B cell (primary cell): ENCODE measurements at regions of chr2 and their contacts with region 1.

Region 1: GRCh38 chr2:238288650-238289573 is 502 bp upstream of the PER2 start:
- DNase-seq: peak; percentile 99
- ATAC-seq: peak; percentile 88
- H3K4me3 ChIP-seq: peak overlapping the region; percentile 51 to 89 (median 87)
- H3K4me3 Mint-ChIP-seq: peak overlapping the region; percentile 97
- H3K27ac ChIP-seq: peak overlapping the region; percentile 76 to 93
- H3K27ac Mint-ChIP-seq: peak overlapping the region; percentile 98
- H3K4me1 ChIP-seq: peaks cover 17 to 28% of the 10 kb centered on the region in 2 donors
- H3K4me1 Mint-ChIP-seq: peaks cover 38% of the 10 kb centered on the region
- H3K27me3 ChIP-seq: peaks cover 0 to 2% (median 0%) of the 10 kb centered on the region in 4 experiments
- H3K27me3 Mint-ChIP-seq: no peaks in the 10 kb centered on the region
- CTCF ChIP-seq: peak; percentile 25

Region 2: DNA sequence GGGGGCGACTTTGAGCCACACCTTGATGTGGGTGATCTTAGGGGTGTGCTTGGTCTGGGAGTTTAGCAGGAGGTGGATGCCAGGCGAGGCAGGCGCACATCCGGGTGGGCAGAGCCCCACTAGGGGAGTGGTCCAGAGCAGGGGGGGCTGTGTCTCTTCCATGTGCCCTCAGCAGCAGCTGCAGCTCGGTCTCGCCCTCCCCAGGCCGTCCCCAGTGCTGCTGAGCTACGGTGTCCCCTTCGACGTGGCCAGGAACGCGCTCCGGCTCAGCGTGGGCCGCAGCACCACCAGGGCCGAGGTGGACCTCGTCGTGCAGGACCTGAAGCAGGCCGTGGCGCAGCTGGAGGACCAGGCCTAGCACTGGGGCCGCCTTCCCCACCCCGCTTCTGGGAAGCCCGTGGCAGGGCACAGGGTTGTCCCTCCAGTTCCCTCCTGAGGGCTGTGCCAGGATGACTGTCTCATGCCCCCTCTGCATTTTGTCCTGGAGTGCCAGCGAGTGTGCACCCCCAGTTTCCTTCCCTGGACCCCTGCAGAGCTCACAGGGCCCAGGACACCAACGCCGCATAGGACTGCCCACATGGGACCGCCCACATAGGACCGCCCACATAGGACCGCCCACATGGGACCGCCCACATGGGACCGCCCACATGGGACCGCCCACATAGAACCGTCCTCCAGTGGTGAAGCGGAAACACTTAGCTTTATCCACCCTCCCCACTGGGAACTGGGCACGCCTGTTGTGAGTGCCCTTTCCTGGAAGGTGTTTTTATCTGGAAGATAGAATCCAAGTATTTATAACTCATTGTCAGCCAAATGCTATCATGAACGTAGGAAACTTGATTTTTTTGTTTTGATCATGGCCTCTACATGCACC is 190.7 kb before region 1 on chr2:
- CTCF ChIA-PET with region 1: no interaction called
- POLR2A ChIA-PET with region 1: no interaction called
- intact Hi-C with region 1: loop called (anchors 2 kb)
- DNase-seq: peak; percentile 73
- ATAC-seq: peak; percentile 97
- H3K4me3 ChIP-seq: peak overlapping the region in 2 of 5 experiments; percentile 26 to 41
- H3K4me3 Mint-ChIP-seq: peak overlapping the region; percentile 84
- H3K27ac ChIP-seq: no peak overlapping the region
- H3K27ac Mint-ChIP-seq: peak overlapping the region; percentile 88
- H3K4me1 ChIP-seq: peaks cover 15 to 22% of the 10 kb centered on the region in 2 donors
- H3K4me1 Mint-ChIP-seq: peaks cover 18% of the 10 kb centered on the region
- H3K27me3 ChIP-seq: no peaks in the 10 kb centered on the region
- H3K27me3 Mint-ChIP-seq: no peaks in the 10 kb centered on the region
- CTCF ChIP-seq: no peak

Region 3: DNA sequence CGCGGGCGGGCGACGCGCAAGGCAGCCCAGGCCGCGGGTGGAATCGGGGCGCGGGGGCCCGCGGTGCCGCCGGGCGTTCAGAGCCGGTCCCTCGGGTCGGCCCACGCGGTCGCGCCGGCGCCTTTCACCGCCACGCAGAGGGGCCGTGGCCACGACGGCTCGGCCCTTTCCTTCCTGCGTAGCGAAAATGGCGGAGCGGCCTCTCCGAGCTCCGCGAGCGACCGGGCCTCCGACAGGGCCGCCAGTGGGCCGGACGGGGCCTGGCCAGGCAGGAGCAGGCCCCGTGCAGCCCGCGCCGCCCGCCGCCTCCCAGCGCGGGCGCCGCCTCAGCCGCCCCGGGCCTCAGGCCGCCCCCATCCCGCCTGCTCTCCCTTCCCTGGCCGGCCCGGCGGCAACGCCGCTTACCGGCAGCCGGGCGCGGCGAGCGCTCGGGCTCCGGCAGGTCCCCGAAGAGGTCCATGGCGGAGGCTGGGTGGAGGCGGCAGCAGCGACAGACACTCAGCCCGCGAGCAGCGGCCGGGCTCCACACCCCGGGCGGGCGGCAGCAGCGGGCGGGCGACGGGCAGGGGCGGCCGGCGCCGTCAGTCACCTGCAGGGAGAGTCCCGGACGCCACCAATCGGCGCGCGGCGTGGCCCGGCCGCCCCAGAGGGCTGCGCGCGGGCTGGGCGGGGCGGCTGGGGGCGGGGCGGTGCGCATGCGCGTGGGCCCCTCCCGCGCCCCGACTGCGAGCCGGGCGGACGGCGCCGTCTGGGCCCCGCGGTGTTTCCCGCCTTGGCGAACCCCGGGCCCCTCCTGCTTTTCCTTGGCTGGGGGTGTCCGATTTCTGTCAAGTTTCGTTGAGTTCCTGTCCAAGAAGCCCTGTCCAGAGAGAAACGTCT is 85.6 kb before region 1 on chr2 and contains the start of gene ILKAP:
- CTCF ChIA-PET with region 1: no interaction called
- POLR2A ChIA-PET with region 1: no interaction called
- intact Hi-C with region 1: loop called (anchors 1 kb)
- DNase-seq: peak; percentile 93
- ATAC-seq: peak; percentile 97
- H3K4me3 ChIP-seq: peak within 1 kb of the TSS; percentile 46 to 72 (median 58)
- H3K4me3 Mint-ChIP-seq: peak within 1 kb of the TSS; percentile 86
- H3K27ac ChIP-seq: peak within 1 kb of the TSS; percentile 78 to 93
- H3K27ac Mint-ChIP-seq: peak within 1 kb of the TSS; percentile 91
- H3K4me1 ChIP-seq: peaks cover 23 to 31% of the 10 kb centered on the region in 2 donors
- H3K4me1 Mint-ChIP-seq: peaks cover 47% of the 10 kb centered on the region
- H3K27me3 ChIP-seq: peaks cover 0 to 8% (median 0%) of the 10 kb centered on the region in 4 experiments
- H3K27me3 Mint-ChIP-seq: no peaks in the 10 kb centered on the region
- CTCF ChIP-seq: no peak
- total RNA-seq, gene ILKAP: 98.6 and 102 TPM in 2 replicates

Region 4: DNA sequence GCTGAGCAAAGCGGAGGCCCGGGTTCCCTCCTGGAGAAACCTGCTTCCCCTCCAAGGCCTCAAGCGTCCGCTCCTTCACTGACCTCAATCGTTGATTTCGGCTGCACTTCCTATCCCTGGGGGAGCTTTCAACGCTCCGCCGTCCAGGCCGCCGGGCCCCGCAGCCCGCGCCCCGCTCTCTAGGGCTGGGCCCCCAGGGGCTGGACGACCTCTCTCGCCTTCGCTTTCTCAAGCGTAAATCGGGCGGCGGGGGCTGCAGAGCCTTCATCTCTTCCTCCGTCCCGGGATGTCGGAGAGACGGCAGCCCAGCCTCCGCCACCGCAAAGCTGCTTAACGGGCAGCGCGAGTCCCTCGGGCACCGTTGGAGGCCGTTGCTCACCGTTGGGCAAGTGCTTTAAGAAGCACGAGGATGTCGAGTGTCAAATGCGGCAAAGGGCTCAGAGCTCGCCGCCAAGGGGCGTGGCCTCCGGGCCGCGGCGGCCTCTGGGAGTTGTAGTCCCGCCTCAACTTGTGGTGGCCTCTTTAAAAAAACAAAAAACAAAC is 57.6 kb before region 1 on chr2:
- CTCF ChIA-PET with region 1: no interaction called
- POLR2A ChIA-PET with region 1: no interaction called
- intact Hi-C with region 1: loop called (anchors 2 kb)
- DNase-seq: peak; percentile 86
- ATAC-seq: peak; percentile 77
- H3K4me3 ChIP-seq: peak overlapping the region; percentile 6 to 84 (median 67)
- H3K4me3 Mint-ChIP-seq: peak overlapping the region; percentile 94
- H3K27ac ChIP-seq: peak overlapping the region in 1 of 2 donors; percentile 35
- H3K27ac Mint-ChIP-seq: peak overlapping the region; percentile 15
- H3K4me1 ChIP-seq: peaks cover 7 to 18% of the 10 kb centered on the region in 2 donors
- H3K4me1 Mint-ChIP-seq: peaks cover 27% of the 10 kb centered on the region
- H3K27me3 ChIP-seq: peaks cover 0 to 17% (median 5%) of the 10 kb centered on the region in 4 experiments
- H3K27me3 Mint-ChIP-seq: peaks cover 31% of the 10 kb centered on the region
- CTCF ChIP-seq: no peak

Region 5: DNA sequence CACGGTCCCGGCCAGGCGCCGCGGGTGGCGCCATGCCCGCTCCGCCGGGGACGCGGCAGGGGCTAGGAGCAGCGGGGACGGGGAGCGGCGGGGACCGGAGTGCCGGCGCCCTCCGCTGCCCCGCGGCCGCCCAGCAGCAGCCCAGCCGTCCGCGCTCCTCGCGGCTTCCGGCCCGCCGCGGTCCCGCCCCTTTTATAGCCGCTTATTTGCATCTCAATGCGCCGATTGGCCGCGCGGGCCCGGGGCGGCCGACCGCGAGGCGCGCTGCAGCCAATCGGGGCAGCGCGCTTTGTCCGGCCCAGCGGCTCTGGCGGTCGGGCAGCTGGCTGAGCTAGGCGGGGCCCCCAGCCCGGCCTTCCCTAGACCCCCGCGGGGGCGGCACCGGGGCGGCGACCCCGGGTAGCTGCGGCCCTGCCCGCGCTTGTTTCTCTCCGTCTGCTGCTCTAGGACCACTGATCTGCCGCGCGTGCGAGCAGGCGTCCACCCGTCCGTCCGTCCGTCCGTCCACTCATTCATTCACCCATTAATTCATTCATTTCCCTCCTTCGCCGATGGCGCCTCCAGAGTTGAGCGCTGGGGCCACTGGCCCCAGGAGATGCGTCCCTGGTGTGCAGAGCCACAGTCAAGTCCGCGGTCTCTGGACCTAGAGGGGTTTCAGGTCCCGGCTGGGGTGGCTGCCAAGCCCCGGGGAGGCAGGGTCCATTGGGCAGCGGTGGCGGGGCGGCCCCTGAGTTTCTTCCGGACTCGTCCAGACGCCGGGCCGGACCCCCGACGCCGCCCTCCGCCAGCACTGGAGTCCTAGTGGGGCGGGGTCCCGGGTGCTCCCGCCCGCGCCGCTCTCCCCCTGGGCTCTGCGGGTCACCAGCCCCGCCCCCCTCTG is 48.8 kb before region 1 on chr2 and contains the start of gene HES6:
- CTCF ChIA-PET with region 1: no interaction called
- POLR2A ChIA-PET with region 1: no interaction called
- intact Hi-C with region 1: loop called (anchors 1 kb)
- DNase-seq: peak; percentile 86
- ATAC-seq: peak; percentile 83
- H3K4me3 ChIP-seq: peak within 1 kb of the TSS; percentile 38 to 76 (median 58)
- H3K4me3 Mint-ChIP-seq: peak within 1 kb of the TSS; percentile 94
- H3K27ac ChIP-seq: no peak within 1 kb of the TSS
- H3K27ac Mint-ChIP-seq: peak within 1 kb of the TSS; percentile 82
- H3K4me1 ChIP-seq: peaks cover 14 to 15% of the 10 kb centered on the region in 2 donors
- H3K4me1 Mint-ChIP-seq: peaks cover 15% of the 10 kb centered on the region
- H3K27me3 ChIP-seq: peaks cover 0 to 45% (median 16%) of the 10 kb centered on the region in 4 experiments
- H3K27me3 Mint-ChIP-seq: peaks cover 13% of the 10 kb centered on the region
- CTCF ChIP-seq: no peak
- total RNA-seq, gene HES6: 8.8 and 14.3 TPM in 2 replicates

Region 6: GRCh38 chr2:238277695-238278094 is 11.2 kb before region 1 on chr2:
- CTCF ChIA-PET with region 1: no interaction called
- POLR2A ChIA-PET with region 1: no interaction called
- intact Hi-C with region 1: no loop called
- DNase-seq: no peak
- ATAC-seq: no peak
- H3K4me3 ChIP-seq: no peak overlapping the region
- H3K4me3 Mint-ChIP-seq: no peak overlapping the region
- H3K27ac ChIP-seq: no peak overlapping the region
- H3K27ac Mint-ChIP-seq: no peak overlapping the region
- H3K4me1 ChIP-seq: no peaks in the 10 kb centered on the region
- H3K4me1 Mint-ChIP-seq: peaks cover 22% of the 10 kb centered on the region
- H3K27me3 ChIP-seq: no peaks in the 10 kb centered on the region
- H3K27me3 Mint-ChIP-seq: no peaks in the 10 kb centered on the region
- CTCF ChIP-seq: no peak

Region 7: GRCh38 chr2:238320246-238320647 is 31.3 kb after region 1 on chr2 and contains the start of gene TRAF3IP1:
- CTCF ChIA-PET with region 1: no interaction called
- POLR2A ChIA-PET with region 1: interaction called, 5 read pairs
- intact Hi-C with region 1: loop called (anchors 1 kb)
- DNase-seq: peak; percentile 90
- ATAC-seq: peak; percentile 98
- H3K4me3 ChIP-seq: peak within 1 kb of the TSS; percentile 19 to 74 (median 53)
- H3K4me3 Mint-ChIP-seq: peak within 1 kb of the TSS; percentile 85
- H3K27ac ChIP-seq: no peak within 1 kb of the TSS
- H3K27ac Mint-ChIP-seq: peak within 1 kb of the TSS; percentile 70
- H3K4me1 ChIP-seq: peaks cover 12 to 16% of the 10 kb centered on the region in 2 donors
- H3K4me1 Mint-ChIP-seq: peaks cover 15% of the 10 kb centered on the region
- H3K27me3 ChIP-seq: peaks cover 0 to 3% (median 0%) of the 10 kb centered on the region in 4 experiments
- H3K27me3 Mint-ChIP-seq: peaks cover 9% of the 10 kb centered on the region
- CTCF ChIP-seq: no peak
- total RNA-seq, gene TRAF3IP1: 15.2 and 15.5 TPM in 2 replicates